Activated CD4-positive, alpha-beta T cell treated with anti-CD3 and anti-CD28 coated beads for 36 hours (primary cell): ENCODE measurements at regions of chr7 and their contacts with region 1.

Region 1: GRCh38 chr7:73683056-73683964 is at the starts of genes BUD23 and DNAJC30:
- DNase-seq: peak; percentile 99
- ATAC-seq: peak; percentile 98
- H3K4me3 Mint-ChIP-seq: peak within 1 kb of the TSS; percentile 89
- H3K27ac Mint-ChIP-seq: peak within 1 kb of the TSS; percentile 96
- H3K4me1 Mint-ChIP-seq: peaks cover 41% of the 10 kb centered on the region
- H3K27me3 Mint-ChIP-seq: no peaks in the 10 kb centered on the region
- total RNA-seq, gene BUD23: 71.4 to 95.5 TPM
- total RNA-seq, gene DNAJC30: 6.9 to 7.8 TPM

Region 2: GRCh38 chr7:73364006-73364728 is 319.1 kb before region 1 on chr7:
- CTCF ChIA-PET with region 1: no interaction called
- POLR2A ChIA-PET with region 1: no interaction called
- intact Hi-C with region 1: no loop called
- DNase-seq: no peak
- ATAC-seq: no peak
- H3K4me3 Mint-ChIP-seq: no peak overlapping the region
- H3K27ac Mint-ChIP-seq: no peak overlapping the region
- H3K4me1 Mint-ChIP-seq: no peaks in the 10 kb centered on the region
- H3K27me3 Mint-ChIP-seq: peaks cover 3% of the 10 kb centered on the region

Region 3: GRCh38 chr7:73557108-73557396 is 126.3 kb before region 1 on chr7:
- CTCF ChIA-PET with region 1: no interaction called
- POLR2A ChIA-PET with region 1: no interaction called
- intact Hi-C with region 1: loop called (anchors 1 to 2 kb)
- DNase-seq: peak; percentile 95
- ATAC-seq: peak; percentile 92
- H3K4me3 Mint-ChIP-seq: peak overlapping the region; percentile 93
- H3K27ac Mint-ChIP-seq: peak overlapping the region; percentile 91
- H3K4me1 Mint-ChIP-seq: peaks cover 35% of the 10 kb centered on the region
- H3K27me3 Mint-ChIP-seq: no peaks in the 10 kb centered on the region

Region 4: DNA sequence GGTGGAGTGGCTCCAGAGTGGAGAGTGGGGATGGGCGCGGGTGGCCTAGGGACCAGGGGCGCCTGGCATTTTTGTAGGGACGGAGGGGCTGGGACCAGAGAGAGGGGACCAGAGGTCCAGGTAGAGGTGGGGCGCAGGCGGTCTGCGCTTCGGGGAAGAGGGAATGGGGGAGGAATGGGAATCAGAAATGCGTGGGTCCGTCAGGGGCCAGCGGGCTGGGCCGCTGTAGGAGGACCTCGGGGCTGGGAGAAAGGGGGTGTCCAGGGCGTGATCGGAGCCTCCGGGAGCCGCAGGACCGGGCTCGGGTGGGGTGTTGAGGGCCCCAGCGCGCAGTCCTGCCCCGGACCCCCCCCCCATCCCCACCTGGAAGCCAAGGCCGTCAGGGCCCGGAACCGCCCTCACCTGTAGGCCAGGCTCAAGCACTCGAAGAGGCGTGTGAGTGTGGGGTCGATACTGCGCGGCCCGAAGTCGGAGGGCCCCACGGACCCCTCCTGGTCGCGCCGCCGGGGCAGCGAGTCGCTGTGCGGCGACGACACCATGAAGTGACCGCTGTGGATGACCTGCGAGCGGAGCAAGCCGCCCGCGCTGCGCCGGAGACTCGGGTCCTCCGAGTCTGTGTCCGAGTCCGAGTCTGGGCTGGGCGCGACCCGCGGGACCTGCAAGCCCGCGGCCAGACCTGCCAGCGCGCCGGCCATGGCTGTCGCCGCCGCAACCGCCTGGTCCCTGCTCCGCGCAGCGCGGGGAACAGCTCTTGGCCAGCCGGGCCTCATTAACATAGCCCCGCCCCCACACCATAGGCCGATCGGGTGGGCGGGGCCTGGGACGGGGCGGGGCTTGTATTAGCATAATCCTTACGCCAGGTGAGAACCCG is 59.3 kb before region 1 on chr7 and contains the start of gene MLXIPL:
- CTCF ChIA-PET with region 1: interaction called, 5 read pairs
- POLR2A ChIA-PET with region 1: no interaction called
- intact Hi-C with region 1: loop called in 1 of 2 experiments (anchors 5 kb)
- DNase-seq: peak; percentile 85
- ATAC-seq: peak; percentile 95
- H3K4me3 Mint-ChIP-seq: no peak within 1 kb of the TSS
- H3K27ac Mint-ChIP-seq: no peak within 1 kb of the TSS
- H3K4me1 Mint-ChIP-seq: peaks cover 8% of the 10 kb centered on the region
- H3K27me3 Mint-ChIP-seq: peaks cover 43% of the 10 kb centered on the region
- total RNA-seq, gene MLXIPL: not detected

Region 5: GRCh38 chr7:73638911-73639310 is 44.4 kb before region 1 on chr7:
- CTCF ChIA-PET with region 1: no interaction called
- POLR2A ChIA-PET with region 1: no interaction called
- intact Hi-C with region 1: loop called in 1 of 2 experiments (anchors 5 kb)
- DNase-seq: no peak
- ATAC-seq: no peak
- H3K4me3 Mint-ChIP-seq: no peak overlapping the region
- H3K27ac Mint-ChIP-seq: no peak overlapping the region
- H3K4me1 Mint-ChIP-seq: peaks cover 4% of the 10 kb centered on the region
- H3K27me3 Mint-ChIP-seq: peaks cover 13% of the 10 kb centered on the region

Region 6: GRCh38 chr7:73701357-73701995 is 18.2 kb after region 1 on chr7:
- CTCF ChIA-PET with region 1: interaction called, 3 read pairs
- POLR2A ChIA-PET with region 1: interaction called, 6 read pairs
- intact Hi-C with region 1: loop called in 1 of 2 experiments (anchors 1 kb)
- DNase-seq: peak; percentile 59
- ATAC-seq: no peak
- H3K4me3 Mint-ChIP-seq: no peak overlapping the region
- H3K27ac Mint-ChIP-seq: no peak overlapping the region
- H3K4me1 Mint-ChIP-seq: peaks cover 9% of the 10 kb centered on the region
- H3K27me3 Mint-ChIP-seq: no peaks in the 10 kb centered on the region